K562 (cell line): ENCODE measurements at regions of chr7 and their contacts with region 1.

Region 1: DNA sequence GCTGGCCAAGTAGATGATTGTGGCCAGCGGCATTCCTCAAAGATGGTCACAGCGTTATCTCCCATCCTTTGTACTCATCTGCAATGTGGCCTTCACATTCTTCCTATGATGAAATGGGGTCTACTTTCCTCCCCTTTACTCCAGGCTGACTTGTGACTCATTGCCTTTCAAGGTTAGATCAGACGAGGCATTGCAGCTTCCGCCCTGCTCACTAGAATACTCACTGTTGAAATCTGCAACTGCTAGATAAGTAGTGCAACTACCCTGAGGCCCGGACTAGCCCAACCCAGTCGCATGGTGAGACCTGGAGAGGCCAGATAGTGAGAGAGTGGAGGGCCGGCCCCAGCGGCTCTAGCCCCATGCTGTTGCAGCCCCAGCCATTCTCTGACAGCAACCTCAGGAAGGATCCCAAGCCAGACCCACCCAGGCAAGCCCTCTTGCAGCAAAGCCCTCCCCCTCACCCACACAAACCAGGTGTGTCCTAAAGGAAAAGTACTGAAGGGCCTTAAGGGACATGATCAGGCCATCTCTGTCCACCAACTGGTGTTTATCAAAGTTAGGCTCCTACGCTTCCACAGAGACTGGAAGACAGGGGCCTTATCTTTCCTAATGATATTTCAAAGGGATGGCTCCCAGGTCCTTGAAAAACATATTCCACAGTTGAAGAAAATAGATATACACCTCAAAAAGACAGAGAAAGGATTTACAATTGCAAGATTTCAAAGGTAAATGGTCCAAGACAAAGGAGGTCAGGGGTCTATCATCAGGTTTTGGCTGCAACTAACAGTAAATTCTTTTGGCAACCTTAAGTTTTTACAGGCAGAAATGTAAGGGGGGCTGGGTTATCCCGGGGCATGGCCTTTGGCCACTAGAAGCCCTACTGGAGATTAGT is 107.2 kb upstream of the TRIM24 start:
- DNase-seq: peak; percentile 98 to 99 (median 98)
- ATAC-seq: peak; percentile 96
- H3K4me3 ChIP-seq: no peak overlapping the region
- H3K27ac ChIP-seq: peak overlapping the region; percentile 98
- H3K4me1 ChIP-seq: peaks cover 10 to 40% of the 10 kb centered on the region in 2 experiments
- H3K27me3 ChIP-seq: no peaks in the 10 kb centered on the region
- CTCF ChIP-seq: no peak
- EP300 ChIP-seq: peak; percentile 99
- POLR2A ChIP-seq: no peak
- RAD21 ChIP-seq: peak; percentile 14 to 55; a peak in 2 of 4 replicates

Region 2: GRCh38 chr7:136900005-136900404 is 1452.8 kb before region 1 on chr7:
- CTCF ChIA-PET with region 1: no interaction called
- POLR2A ChIA-PET with region 1: no interaction called
- in situ Hi-C with region 1: no loop called
- intact Hi-C with region 1: no loop called
- DNase-seq: no peak
- ATAC-seq: no peak
- H3K4me3 ChIP-seq: no peak overlapping the region
- H3K27ac ChIP-seq: no peak overlapping the region
- H3K4me1 ChIP-seq: no peaks in the 10 kb centered on the region
- H3K27me3 ChIP-seq: no peaks in the 10 kb centered on the region
- CTCF ChIP-seq: no peak
- EP300 ChIP-seq: no peak
- POLR2A ChIP-seq: no peak
- RAD21 ChIP-seq: no peak

Region 3: GRCh38 chr7:138243430-138243829 is 109.4 kb before region 1 on chr7:
- CTCF ChIA-PET with region 1: no interaction called
- POLR2A ChIA-PET with region 1: no interaction called
- in situ Hi-C with region 1: no loop called
- intact Hi-C with region 1: loop called (anchors 1 kb)
- DNase-seq: peak; percentile 50 to 91 (median 68)
- ATAC-seq: peak; percentile 99
- H3K4me3 ChIP-seq: no peak overlapping the region
- H3K27ac ChIP-seq: peak overlapping the region; percentile 27; the same call in 1 of the 3 replicates
- H3K4me1 ChIP-seq: peaks cover 0 to 6% of the 10 kb centered on the region in 2 experiments; a peak in 2 of 5 replicates
- H3K27me3 ChIP-seq: no peaks in the 10 kb centered on the region
- CTCF ChIP-seq: peak; percentile 13 to 50 (median 33); a peak in 3 of 6 replicates
- EP300 ChIP-seq: peak; percentile 92
- POLR2A ChIP-seq: no peak
- RAD21 ChIP-seq: peak; percentile 47 to 67

Region 4: DNA sequence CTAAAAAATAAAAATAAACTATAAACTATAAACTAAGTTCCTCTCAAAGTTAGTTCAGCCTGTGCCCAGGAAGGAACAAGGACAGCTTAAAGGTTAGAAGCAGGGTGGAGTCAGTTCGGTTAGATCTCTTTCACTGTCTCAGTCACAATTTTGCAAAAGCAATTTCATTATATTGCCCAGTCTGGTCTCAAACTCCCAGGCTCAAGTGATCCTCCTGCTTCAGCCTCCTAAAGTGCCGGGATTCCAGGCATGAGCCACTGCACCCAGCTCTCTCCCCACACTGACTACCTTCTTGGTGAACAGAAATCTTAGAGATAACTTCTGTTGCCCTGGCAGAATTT is 39.0 kb before region 1 on chr7:
- CTCF ChIA-PET with region 1: no interaction called
- POLR2A ChIA-PET with region 1: interaction called, 4 read pairs
- in situ Hi-C with region 1: no loop called
- intact Hi-C with region 1: loop called (anchors 1 kb)
- DNase-seq: no peak
- ATAC-seq: no peak
- H3K4me3 ChIP-seq: no peak overlapping the region
- H3K27ac ChIP-seq: peak overlapping the region; percentile 71
- H3K4me1 ChIP-seq: peaks cover 6 to 15% of the 10 kb centered on the region in 2 experiments; a peak in 4 of 5 replicates
- H3K27me3 ChIP-seq: no peaks in the 10 kb centered on the region
- CTCF ChIP-seq: no peak
- EP300 ChIP-seq: no peak
- POLR2A ChIP-seq: no peak
- RAD21 ChIP-seq: no peak

Region 5: DNA sequence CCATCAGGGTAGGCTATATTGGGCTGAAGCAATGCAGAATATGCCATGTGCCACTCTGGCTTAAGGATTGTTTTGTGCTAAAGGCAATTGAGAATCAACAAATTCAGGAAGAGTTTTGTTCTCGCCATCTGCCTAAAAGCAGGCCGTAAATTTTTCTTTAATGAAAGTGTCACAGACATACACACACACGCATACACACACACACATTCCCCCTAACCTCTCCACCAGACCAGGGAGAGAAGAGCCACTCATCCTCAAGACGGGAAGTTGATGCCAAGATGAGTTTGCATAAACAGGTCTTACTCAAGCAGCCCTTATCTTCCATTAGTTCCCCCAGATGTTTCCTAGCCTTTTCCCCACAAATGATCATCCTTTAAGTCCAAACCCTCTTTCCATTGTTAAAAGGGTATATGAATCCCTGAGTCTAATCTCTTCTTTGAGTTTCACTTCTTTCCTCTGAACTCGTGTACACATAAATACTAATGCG is 47.6 kb after region 1 on chr7:
- CTCF ChIA-PET with region 1: no interaction called
- POLR2A ChIA-PET with region 1: no interaction called
- in situ Hi-C with region 1: no loop called
- intact Hi-C with region 1: loop called (anchors 2 kb)
- DNase-seq: peak; percentile 29 to 77 (median 56)
- ATAC-seq: peak; percentile 87
- H3K4me3 ChIP-seq: no peak overlapping the region
- H3K27ac ChIP-seq: peak overlapping the region; percentile 38
- H3K4me1 ChIP-seq: peaks cover 0 to 7% of the 10 kb centered on the region in 2 experiments; a peak in 2 of 5 replicates
- H3K27me3 ChIP-seq: no peaks in the 10 kb centered on the region
- CTCF ChIP-seq: no peak
- EP300 ChIP-seq: peak; percentile 60
- POLR2A ChIP-seq: no peak
- RAD21 ChIP-seq: no peak; a peak in 1 of 4 replicates

Region 6: DNA sequence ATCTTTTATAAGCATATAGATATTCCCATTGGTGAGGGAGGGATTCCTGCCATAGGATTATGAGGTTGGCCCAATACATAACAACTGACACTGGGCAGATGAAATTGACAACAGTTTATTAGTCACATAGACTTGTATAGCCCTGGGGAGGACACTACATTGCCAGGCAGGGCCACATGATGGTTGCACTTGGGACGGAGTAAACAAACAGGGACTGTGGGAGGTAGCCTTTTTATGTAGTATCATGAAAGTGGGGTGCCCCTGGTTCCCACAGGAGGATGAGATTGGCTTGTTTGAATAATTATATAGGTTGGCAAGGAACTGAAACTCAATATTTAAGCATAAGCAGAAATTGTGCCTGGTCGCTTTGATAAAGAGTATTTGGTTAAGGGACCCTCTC is 130.7 kb after region 1 on chr7:
- CTCF ChIA-PET with region 1: no interaction called
- POLR2A ChIA-PET with region 1: no interaction called
- in situ Hi-C with region 1: no loop called
- intact Hi-C with region 1: no loop called
- DNase-seq: no peak
- ATAC-seq: peak; percentile 65
- H3K4me3 ChIP-seq: no peak overlapping the region
- H3K27ac ChIP-seq: peak overlapping the region; percentile 37; the same call in 1 of the 3 replicates
- H3K4me1 ChIP-seq: peaks cover 3 to 12% of the 10 kb centered on the region in 2 experiments; a peak in 3 of 5 replicates
- H3K27me3 ChIP-seq: no peaks in the 10 kb centered on the region
- CTCF ChIP-seq: no peak
- EP300 ChIP-seq: no peak
- POLR2A ChIP-seq: no peak
- RAD21 ChIP-seq: no peak